HEK293T (cell line): ENCODE measurements at regions of chr1 and their contacts with region 1.

Region 1: DNA sequence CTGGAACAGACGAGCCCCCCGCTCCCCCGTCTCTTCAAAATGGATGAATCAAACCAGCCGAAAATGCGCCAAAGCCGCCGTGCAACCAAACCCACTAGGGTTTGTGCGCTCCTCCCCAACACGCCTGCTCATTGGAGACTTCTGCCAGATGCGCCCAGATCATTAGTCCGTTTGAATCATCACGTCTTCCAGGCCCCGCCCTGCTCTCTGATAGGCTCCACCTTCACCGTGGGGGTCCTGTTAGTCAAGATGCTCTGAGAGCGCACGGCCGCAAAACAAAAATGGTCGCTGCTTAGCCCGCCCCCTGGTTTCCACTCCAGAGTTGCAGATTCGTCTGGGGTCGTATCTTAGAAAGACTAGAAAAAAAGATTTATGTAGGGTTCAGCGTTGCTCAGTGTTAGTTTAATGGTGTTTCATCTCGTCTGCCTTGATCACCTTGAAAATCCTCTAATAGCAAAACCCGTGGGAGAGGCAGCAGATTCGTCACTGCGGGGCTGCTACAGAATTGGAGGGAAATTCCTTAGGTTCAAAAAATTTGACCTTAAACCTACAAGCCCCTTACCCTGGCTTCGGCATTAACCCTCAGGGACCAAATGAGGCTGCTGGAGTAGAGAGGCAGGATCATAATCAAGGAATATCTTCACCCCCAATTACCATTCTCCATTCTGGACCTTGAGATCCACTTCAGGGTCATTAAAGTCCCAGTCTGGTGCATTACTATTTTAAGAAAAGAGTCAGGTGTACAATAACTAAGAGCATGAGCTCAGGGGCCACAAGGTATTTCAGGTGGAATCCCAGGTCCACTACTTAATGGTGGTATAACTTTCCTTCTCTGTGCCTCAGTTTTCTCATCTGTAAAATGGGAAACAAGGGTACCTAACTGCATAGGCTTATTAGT is at the start of gene NUCKS1:
- DNase-seq: peak; percentile 89

Region 2: DNA sequence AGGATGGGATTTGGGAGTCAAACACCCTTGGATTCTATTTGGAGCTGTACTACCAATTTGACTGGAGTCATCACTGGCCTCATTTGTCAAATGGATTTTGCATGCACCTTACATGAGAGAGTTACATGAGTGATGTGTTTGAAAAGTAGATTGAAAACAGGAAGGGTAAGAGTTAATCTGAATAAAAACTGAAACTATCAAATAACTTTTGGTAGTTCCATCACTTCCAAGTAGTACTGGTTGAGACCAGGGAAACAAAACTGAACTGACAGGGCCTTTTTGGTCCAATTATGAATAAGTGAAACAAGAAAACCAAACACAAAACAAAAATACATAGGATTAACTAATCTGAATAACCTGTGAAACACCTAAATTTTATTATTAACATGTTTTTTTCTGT is 30.6 kb before region 1 on chr1:
- CTCF ChIA-PET with region 1: no interaction called
- POLR2A ChIA-PET with region 1: no interaction called
- DNase-seq: no peak

Region 3: DNA sequence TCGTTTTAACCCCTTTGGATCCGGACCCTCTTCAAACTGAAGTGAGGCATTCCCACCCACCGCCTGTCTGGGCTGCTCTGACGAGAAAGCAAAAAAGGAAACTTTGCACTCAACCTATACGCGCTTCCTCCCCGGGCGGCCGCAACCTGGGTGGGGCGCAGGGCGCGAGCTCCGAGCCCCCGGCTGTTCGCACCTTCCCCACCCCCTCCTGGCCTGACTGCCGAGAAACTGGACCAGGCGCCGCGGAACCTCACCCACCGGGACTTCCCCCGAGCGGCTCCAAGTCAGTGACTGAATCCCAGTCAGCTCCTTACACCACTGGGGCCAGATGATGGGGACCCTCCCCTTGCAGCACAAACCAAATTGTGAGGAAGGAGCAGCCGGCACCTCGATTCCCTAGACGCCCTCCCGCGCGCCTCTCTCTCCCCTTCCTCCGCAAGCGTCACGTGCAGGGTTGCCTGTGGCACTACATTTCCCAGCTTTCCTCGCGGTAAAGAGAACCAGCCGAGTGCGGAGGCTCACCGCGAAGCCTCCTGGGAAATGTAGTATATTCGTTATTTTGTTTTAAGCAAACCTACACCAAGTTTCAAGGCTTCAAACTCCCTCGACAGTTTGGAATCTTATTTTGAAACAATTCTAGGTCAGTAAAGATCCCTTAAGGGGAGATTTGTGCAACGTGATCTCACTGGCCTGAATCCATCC is 24.8 kb after region 1 on chr1 and contains the start of gene RAB29:
- CTCF ChIA-PET with region 1: no interaction called
- POLR2A ChIA-PET with region 1: interaction called, 10 read pairs
- DNase-seq: peak; percentile 89

Region 4: GRCh38 chr1:205805082-205805712 is 54.8 kb after region 1 on chr1:
- CTCF ChIA-PET with region 1: no interaction called
- POLR2A ChIA-PET with region 1: no interaction called
- DNase-seq: no peak